ENCODE measurements at regions of chr16 and their contacts with region 1.

Region 1: DNA sequence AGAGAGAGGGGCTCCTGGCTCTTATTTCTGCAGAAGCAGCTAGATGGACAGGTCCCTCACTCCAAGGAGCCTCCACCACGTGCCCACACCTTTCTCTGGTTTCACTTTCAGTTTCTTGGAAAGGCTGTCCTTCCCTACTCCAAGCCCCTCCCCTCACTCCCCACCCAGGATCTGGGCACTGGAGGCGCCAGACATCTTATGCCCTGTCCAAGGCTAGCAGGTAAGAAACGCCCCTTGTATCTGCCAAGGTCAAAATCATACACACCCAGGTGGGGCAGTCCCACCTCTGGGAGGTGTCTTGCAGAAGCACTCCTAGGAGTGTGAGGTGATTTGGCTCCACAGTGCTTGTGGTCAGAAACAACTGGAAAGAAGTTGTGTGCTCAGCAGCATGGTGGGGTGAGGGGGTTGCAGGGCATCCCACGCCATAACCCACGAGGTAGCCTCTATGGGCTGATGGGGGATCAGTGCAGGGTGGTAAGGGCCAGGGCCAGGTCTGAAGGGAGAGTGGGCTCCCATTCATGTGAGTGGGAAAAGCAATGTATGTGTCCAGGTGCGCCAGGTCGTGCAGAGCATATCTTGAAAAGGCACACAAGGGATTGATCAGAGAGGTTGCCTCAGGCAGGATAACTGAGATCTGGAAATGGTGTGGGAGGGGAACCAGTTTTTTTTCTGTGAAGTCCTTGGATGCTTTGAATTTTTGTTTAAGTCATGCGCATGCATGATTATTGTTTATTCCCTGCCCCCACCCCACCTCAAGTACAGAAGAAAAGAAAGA is 31.8 kb upstream of the PRM1 start:
- DNase-seq: no peak
- ATAC-seq: no peak
- H3K4me3 Mint-ChIP-seq: no peak overlapping the region
- H3K27ac Mint-ChIP-seq: peak overlapping the region; percentile 47
- H3K4me1 Mint-ChIP-seq: peaks cover 74% of the 10 kb centered on the region
- H3K27me3 Mint-ChIP-seq: no peaks in the 10 kb centered on the region
- CTCF ChIP-seq: no peak

Region 2: DNA sequence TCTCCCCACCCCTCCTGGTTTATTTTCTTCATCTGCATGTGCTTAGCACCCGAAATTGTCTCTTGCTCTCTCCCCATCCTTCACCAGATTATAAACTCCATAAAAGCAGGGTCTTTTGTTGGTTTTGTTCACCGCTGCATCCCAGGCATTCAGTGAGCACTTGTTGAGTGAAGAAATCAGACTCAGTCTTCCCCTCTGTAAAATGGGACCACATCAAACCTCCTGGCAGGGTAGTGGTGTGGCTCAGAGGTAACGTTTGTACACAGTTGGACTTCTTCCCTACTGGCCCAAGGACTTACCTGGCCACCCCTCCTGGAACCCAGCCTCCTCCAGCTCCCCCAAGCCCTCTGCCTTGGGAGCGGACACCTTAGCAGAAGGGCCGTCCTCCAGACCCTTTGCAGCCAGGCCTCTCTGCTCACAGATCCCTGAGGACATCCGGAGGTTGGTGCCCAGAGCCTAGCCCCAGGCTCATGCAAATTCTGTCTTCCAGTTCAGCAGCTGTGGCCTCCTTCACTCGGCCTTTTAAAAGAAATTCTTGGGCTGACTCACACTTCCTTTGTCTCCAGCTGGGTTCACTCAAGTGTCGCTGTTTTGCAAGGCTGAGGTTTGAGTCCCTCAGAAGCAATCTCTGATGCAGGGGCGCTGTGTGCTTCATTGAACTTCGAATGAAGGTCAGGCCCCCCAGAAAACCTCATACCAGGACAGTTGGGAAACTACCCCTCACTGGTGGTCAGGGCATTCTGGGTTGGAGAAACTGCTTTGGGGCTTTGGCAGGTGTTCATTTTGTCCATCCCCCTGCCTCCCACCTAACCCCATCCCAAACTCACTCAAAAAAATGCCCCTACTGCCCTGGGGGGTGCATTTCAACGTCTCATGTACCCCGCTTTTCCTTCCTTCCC is 15.5 kb after region 1 on chr16:
- CTCF ChIA-PET with region 1: interaction called, 11 read pairs
- POLR2A ChIA-PET with region 1: interaction called, 138 read pairs
- intact Hi-C with region 1: loop called (anchors 1 kb)
- DNase-seq: peak; percentile 66
- ATAC-seq: peak; percentile 65
- H3K4me3 Mint-ChIP-seq: peak overlapping the region; percentile 80
- H3K27ac Mint-ChIP-seq: peak overlapping the region; percentile 94
- H3K4me1 Mint-ChIP-seq: peaks cover 72% of the 10 kb centered on the region
- H3K27me3 Mint-ChIP-seq: no peaks in the 10 kb centered on the region
- CTCF ChIP-seq: no peak

Region 3: GRCh38 chr16:11345040-11345862 is 32.3 kb after region 1 on chr16 and contains the start of gene RMI2:
- CTCF ChIA-PET with region 1: no interaction called
- POLR2A ChIA-PET with region 1: interaction called, 8 read pairs
- intact Hi-C with region 1: loop called (anchors 1 kb)
- DNase-seq: peak; percentile 92
- ATAC-seq: peak; percentile 100
- H3K4me3 Mint-ChIP-seq: peak within 1 kb of the TSS; percentile 86
- H3K27ac Mint-ChIP-seq: peak within 1 kb of the TSS; percentile 80
- H3K4me1 Mint-ChIP-seq: peaks cover 37% of the 10 kb centered on the region
- H3K27me3 Mint-ChIP-seq: no peaks in the 10 kb centered on the region
- CTCF ChIP-seq: no peak
- total RNA-seq, gene RMI2: 8.1 TPM in 2 replicates

Measured in activated B cell treated with CpG ODN at 0.5 μM for 24 hours (primary cell).